ENCODE measurements at regions of chr5 and their contacts with region 1.

Region 1: DNA sequence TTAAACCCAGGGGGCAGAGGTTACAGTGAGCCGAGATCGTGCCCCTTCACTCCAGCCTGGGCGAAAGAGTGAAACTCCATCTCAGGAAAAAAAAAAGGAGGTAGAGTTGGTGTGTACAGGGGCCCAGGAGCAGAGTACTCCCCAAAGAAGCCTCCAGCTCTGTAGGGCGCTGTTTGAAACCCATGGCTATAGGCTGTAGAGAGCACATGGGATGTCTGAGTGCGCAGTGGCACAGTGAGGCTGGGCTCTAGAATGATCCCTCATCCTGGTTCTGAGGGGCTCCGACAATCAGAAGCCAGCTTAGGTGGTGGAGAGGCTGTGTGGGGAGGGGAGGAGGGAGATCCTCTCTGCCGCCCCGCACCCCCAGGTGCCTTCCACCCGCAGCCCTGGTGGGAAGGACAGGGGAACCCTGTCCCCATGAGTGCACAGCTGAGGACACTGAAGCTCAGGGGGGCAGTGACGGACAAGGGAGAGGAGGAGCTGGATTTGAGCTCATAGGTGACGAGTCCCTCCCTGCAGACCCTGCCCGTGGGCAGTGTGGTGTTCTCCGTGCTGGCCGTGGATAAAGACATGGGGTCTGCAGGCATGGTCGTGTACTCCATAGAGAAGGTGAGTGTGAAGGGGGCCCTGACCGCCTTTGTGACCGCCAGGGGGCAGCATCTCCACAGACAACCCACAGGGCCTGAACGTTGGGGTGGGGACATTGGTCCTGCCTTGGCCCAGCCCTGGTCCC is 24.6 kb downstream of the CDHR2 start:
- DNase-seq: peak in 1 of 2 experiments; percentile 96
- H3K4me3 ChIP-seq: no peak overlapping the region
- H3K27ac ChIP-seq: no peak overlapping the region
- H3K4me1 ChIP-seq: peaks cover 0 to 2% (median under 1%) of the 10 kb centered on the region in 4 experiments; a peak in 2 of 7 replicates
- H3K27me3 ChIP-seq: peaks cover 0 to 2% (median 0%) of the 10 kb centered on the region in 4 experiments; a peak in 1 of 7 replicates
- CTCF ChIP-seq: peak in 2 of 3 experiments; percentile 88 to 90; a peak in 3 of 4 replicates
- EP300 ChIP-seq: no peak
- POLR2A ChIP-seq: no peak
- RAD21 ChIP-seq: peak; percentile 85

Region 2: GRCh38 chr5:176543428-176544173 is 30.1 kb before region 1 on chr5:
- CTCF ChIA-PET with region 1: interaction called, 16 read pairs
- POLR2A ChIA-PET with region 1: interaction called, 4 read pairs
- DNase-seq: peak in 1 of 2 experiments; percentile 85
- H3K4me3 ChIP-seq: peak overlapping the region; percentile 57 to 81 (median 68)
- H3K27ac ChIP-seq: peak overlapping the region; percentile 20; the same call in 1 of the 2 replicates
- H3K4me1 ChIP-seq: peaks cover 9 to 18% (median 18%) of the 10 kb centered on the region in 4 experiments
- H3K27me3 ChIP-seq: no peaks in the 10 kb centered on the region; a peak in 1 of 7 replicates
- CTCF ChIP-seq: no peak
- EP300 ChIP-seq: no peak
- POLR2A ChIP-seq: no peak; a peak in 1 of 3 replicates
- RAD21 ChIP-seq: no peak; a peak in 1 of 4 replicates

Region 3: GRCh38 chr5:176560364-176560763 is 13.4 kb before region 1 on chr5:
- CTCF ChIA-PET with region 1: interaction called, 21 read pairs
- POLR2A ChIA-PET with region 1: no interaction called
- DNase-seq: no peak
- H3K4me3 ChIP-seq: no peak overlapping the region
- H3K27ac ChIP-seq: no peak overlapping the region
- H3K4me1 ChIP-seq: peaks cover 0 to 5% (median under 1%) of the 10 kb centered on the region in 4 experiments; a peak in 3 of 7 replicates
- H3K27me3 ChIP-seq: no peaks in the 10 kb centered on the region
- CTCF ChIP-seq: no peak
- EP300 ChIP-seq: no peak
- POLR2A ChIP-seq: no peak
- RAD21 ChIP-seq: no peak

Region 4: GRCh38 chr5:176609724-176610434 is 36.1 kb after region 1 on chr5 and contains the start of gene GPRIN1:
- CTCF ChIA-PET with region 1: interaction called, 24 read pairs
- POLR2A ChIA-PET with region 1: no interaction called
- DNase-seq: peak in 1 of 2 experiments; percentile 83
- H3K4me3 ChIP-seq: peak within 1 kb of the TSS; percentile 46 to 70 (median 65)
- H3K27ac ChIP-seq: no peak within 1 kb of the TSS
- H3K4me1 ChIP-seq: peaks cover 0 to 8% (median 5%) of the 10 kb centered on the region in 4 experiments; a peak in 5 of 7 replicates
- H3K27me3 ChIP-seq: peaks cover 0 to 14% (median 10%) of the 10 kb centered on the region in 4 experiments; a peak in 5 of 7 replicates
- CTCF ChIP-seq: peak in 2 of 3 experiments; percentile 24 to 81; a peak in 3 of 4 replicates
- EP300 ChIP-seq: no peak
- POLR2A ChIP-seq: no peak
- RAD21 ChIP-seq: peak; percentile 22 to 55; a peak in 3 of 4 replicates
- total RNA-seq, gene GPRIN1: 12.0 and 12.8 TPM in 2 replicates

Region 5: GRCh38 chr5:176629853-176630712 is 56.4 kb after region 1 on chr5 and contains the starts of genes EIF4E1B and SNCB:
- CTCF ChIA-PET with region 1: interaction called, 10 read pairs
- POLR2A ChIA-PET with region 1: interaction called, 3 read pairs
- DNase-seq: peak in 1 of 2 experiments; percentile 84
- H3K4me3 ChIP-seq: peak within 1 kb of the TSS; percentile 81 to 89 (median 84)
- H3K27ac ChIP-seq: no peak within 1 kb of the TSS
- H3K4me1 ChIP-seq: peaks cover 8 to 34% (median 11%) of the 10 kb centered on the region in 4 experiments
- H3K27me3 ChIP-seq: peaks cover 3 to 40% (median 34%) of the 10 kb centered on the region in 4 experiments
- CTCF ChIP-seq: no peak
- EP300 ChIP-seq: no peak
- POLR2A ChIP-seq: no peak
- RAD21 ChIP-seq: no peak
- total RNA-seq, gene EIF4E1B: 0.63 and 0.97 TPM in 2 replicates
- total RNA-seq, gene SNCB: 5.9 and 6.9 TPM in 2 replicates

Region 6: DNA sequence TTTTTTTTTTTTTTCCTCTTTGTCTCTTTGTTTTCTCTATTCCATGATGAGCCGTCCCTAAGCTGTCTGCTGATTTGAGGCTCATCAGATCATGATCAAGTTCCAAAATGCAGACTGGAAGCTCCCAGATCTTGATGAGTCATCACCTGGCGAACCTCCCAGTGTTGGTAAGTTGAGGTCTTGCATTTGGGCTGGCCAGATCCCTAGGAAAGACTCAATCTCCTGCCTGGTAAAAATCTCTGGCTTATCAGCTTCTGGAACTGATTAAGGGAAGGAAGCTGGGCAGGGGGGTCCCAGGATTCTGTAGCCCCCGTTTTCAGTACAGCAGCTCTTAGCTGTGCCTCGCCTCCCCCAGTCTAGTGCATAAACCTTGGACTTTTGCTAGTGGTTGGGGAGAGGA is 142.6 kb after region 1 on chr5:
- CTCF ChIA-PET with region 1: no interaction called
- POLR2A ChIA-PET with region 1: no interaction called
- DNase-seq: no peak
- H3K4me3 ChIP-seq: no peak overlapping the region
- H3K27ac ChIP-seq: no peak overlapping the region
- H3K4me1 ChIP-seq: peaks cover 0 to 11% (median 5%) of the 10 kb centered on the region in 4 experiments; a peak in 4 of 7 replicates
- H3K27me3 ChIP-seq: no peaks in the 10 kb centered on the region; a peak in 2 of 7 replicates
- CTCF ChIP-seq: no peak
- EP300 ChIP-seq: no peak
- POLR2A ChIP-seq: no peak
- RAD21 ChIP-seq: no peak

Measured in H1 (cell line).